Heart left ventricle (tissue), 16 donors: ENCODE measurements at regions of chr18 and their contacts with region 1.

Region 1: DNA sequence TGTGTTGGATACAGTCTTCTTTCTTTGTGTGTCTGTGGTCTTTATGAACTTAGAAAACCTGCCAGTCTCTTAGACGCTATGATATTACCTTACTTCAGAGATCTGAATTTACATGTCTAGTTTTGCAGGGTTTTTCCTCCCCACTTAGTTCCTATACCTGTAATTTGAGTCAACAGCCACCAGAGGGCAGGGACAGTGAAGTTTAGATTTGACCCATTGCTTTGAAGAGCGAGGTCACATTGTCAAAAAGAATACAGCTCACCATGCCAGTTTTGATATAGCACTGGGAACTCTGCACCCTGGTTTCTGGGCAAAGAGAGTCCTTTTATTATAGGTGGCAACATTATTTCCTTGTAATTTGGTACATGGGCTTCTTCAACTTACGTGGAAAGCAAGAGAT is 102.3 kb downstream of the MAPK4 start:
- DNase-seq: no peak
- ATAC-seq: no peak
- H3K4me3 ChIP-seq: no peak overlapping the region
- H3K27ac ChIP-seq: peak overlapping the region in 5 of 12 donors; percentile 19 to 80 (median 30)
- H3K4me1 ChIP-seq: peaks cover 0 to 47% (median 17%) of the 10 kb centered on the region in 12 donors
- H3K27me3 ChIP-seq: no peaks in the 10 kb centered on the region
- CTCF ChIP-seq: peak in 5 of 12 donors; percentile 7 to 39 (median 25)
- POLR2A ChIP-seq: no peak

Region 2: GRCh38 chr18:50559752-50560680 is 102.2 kb before region 1 on chr18 and contains the start of gene MAPK4:
- intact Hi-C with region 1: loop called in 2 of 10 experiments (anchors 5 to 10 kb)
- DNase-seq: peak; percentile 47 to 71 (median 53)
- ATAC-seq: peak; percentile 63 to 92 (median 86)
- H3K4me3 ChIP-seq: peak within 1 kb of the TSS; percentile 38 to 93 (median 66)
- H3K27ac ChIP-seq: peak within 1 kb of the TSS in 10 of 12 donors; percentile 20 to 87 (median 73)
- H3K4me1 ChIP-seq: peaks cover 0 to 22% (median 10%) of the 10 kb centered on the region in 12 donors
- H3K27me3 ChIP-seq: peaks cover 0 to 69% (median 15%) of the 10 kb centered on the region in 9 donors
- CTCF ChIP-seq: no peak
- POLR2A ChIP-seq: peak in 1 of 2 donors; percentile 11
- total RNA-seq, gene MAPK4: 18.6 to 169 (median 30.1) TPM

Region 3: DNA sequence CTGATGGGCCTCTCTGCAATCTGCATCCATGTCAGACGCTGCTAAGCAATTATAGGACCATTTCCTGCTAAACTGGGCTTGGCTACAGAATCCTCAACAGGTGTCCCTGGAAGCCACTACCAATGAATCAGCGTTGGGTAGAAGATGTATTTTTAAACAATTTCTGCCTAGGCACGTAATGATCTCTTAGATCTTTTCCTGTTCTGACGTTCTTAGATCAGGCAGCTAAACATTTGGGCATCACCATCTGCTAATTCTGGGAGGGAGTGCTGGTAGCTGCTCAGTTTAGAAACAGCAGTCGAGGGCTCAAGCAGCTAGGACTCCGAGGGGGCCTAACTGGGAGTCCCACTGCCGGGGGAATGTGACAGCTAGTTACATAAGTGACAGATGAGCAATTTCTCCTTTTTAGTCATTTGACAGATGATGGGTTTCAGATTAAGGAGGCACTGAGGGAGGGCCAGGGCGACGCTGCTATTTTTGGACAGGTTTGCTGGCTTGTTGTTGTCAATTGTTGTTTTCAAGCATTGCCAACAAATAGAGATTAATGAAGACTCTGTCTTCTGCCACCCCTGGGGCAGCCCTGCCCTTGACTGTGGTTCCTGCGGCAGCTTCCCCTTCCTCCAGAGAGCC is 64.9 kb after region 1 on chr18:
- intact Hi-C with region 1: loop called in 5 of 10 experiments (anchors 5 to 10 kb)
- DNase-seq: no peak
- ATAC-seq: peak in 2 of 4 donors; percentile 4 to 31
- H3K4me3 ChIP-seq: no peak overlapping the region
- H3K27ac ChIP-seq: peak overlapping the region in 9 of 12 donors; percentile 17 to 78 (median 72)
- H3K4me1 ChIP-seq: peaks cover 0 to 35% (median 14%) of the 10 kb centered on the region in 12 donors
- H3K27me3 ChIP-seq: no peaks in the 10 kb centered on the region
- CTCF ChIP-seq: no peak
- POLR2A ChIP-seq: no peak

Region 4: DNA sequence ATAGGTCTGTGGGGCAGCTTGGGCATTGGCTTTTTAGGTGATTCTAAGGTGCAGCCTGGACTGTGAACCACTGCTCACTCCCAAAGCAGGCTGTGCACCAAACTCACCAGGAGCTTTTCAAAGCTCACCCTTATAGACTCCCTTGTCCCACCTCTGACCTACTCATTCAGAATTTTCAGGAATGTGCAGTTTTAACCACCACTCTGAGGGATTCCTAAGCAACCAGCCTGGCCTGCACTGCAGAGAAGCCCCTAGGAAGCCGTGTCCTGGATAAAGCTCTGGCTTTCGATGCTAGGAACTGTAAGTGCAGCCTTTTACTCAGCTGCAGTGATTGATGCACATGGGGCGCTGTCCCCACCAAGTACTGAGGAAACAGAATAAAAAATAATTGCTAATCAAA is 124.7 kb after region 1 on chr18:
- intact Hi-C with region 1: loop called in 2 of 10 experiments (anchors 10 kb)
- DNase-seq: no peak
- ATAC-seq: no peak
- H3K4me3 ChIP-seq: no peak overlapping the region
- H3K27ac ChIP-seq: no peak overlapping the region
- H3K4me1 ChIP-seq: no peaks in the 10 kb centered on the region
- H3K27me3 ChIP-seq: no peaks in the 10 kb centered on the region
- CTCF ChIP-seq: no peak
- POLR2A ChIP-seq: no peak